ENCODE measurements at regions of chr10 and their contacts with region 1.

Region 1: GRCh38 chr10:1048732-1049424 is at the start of gene IDI1:
- DNase-seq: peak; percentile 97
- H3K4me3 Mint-ChIP-seq: peak within 1 kb of the TSS; percentile 96
- H3K27ac Mint-ChIP-seq: peak within 1 kb of the TSS; percentile 99
- H3K4me1 Mint-ChIP-seq: peaks cover 68% of the 10 kb centered on the region
- H3K27me3 Mint-ChIP-seq: no peaks in the 10 kb centered on the region
- total RNA-seq, gene IDI1: 76.0 and 78.9 TPM in 2 replicates

Region 2: DNA sequence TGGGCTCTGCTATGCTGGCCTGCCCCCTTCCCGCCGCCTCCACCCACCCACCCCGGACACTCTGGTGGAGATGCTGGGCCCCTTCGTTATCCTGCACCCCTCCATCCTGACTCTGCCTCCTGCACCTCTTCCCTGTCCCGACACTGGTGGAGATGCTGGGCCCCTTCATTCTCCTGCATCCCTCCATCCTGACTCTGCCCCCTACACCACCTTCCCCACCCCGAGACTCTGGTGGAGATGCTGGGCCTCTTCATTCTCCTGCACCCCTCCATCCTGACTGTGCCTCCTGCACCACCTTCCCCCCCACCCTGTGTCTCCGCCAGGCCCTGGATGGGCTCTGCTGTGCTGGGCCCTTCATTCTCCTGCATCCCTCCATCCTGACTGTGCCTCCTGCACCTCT is 38.2 kb before region 1 on chr10:
- intact Hi-C with region 1: loop called (anchors 1 kb)
- DNase-seq: no peak
- H3K4me3 Mint-ChIP-seq: peak overlapping the region; percentile 61
- H3K27ac Mint-ChIP-seq: peak overlapping the region; percentile 97
- H3K4me1 Mint-ChIP-seq: peaks cover 44% of the 10 kb centered on the region
- H3K27me3 Mint-ChIP-seq: no peaks in the 10 kb centered on the region